ENCODE measurements at regions of chr2 and their contacts with region 1.

Region 1: DNA sequence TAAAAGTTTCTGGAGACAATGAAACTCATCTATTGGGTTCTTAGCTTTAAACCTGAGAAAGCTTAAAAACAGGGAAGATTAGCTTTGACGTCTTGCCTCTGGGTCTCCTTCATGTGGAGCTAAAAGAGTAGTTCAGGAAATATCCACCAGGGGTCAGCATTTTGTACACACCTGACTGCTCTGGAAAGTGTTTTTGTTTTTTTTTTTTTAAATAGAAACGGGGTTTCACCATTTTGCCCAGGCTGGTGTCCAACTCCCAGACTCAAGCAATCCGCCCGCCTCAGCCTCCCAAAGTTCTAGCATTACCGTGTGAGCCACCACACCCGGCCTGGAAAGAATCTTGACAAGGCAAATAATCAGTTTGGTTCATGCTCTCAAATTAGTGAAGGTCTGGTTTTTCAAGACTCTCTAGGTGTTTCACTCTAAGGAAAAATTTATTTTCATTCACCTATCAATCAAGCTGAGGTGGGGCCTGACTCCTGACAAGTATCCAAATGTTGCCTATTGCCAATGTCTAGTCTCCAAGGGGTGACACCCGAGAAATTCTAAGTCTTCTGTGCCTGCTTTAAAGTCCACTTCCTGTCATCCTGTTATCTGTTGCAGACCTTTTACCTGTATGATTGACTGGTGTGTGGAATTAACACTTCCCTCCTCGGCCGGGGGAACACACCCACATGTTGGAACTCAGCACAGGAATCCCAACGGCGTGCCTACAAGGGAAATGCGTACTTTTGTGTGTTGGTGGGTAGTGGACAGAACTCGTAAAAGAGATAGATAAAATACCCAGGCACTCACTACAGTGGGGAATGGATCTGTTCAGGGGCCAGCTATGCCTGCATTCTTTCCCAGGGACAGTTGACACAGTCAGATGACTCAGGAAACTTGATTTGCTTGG is 11.3 kb downstream of the IL1RN start:
- DNase-seq: peak; percentile 77
- H3K4me3 Mint-ChIP-seq: no peak overlapping the region
- H3K27ac Mint-ChIP-seq: no peak overlapping the region
- H3K4me1 Mint-ChIP-seq: peaks cover 20% of the 10 kb centered on the region
- H3K27me3 Mint-ChIP-seq: no peaks in the 10 kb centered on the region
- CTCF ChIP-seq: peak; percentile 58

Region 2: GRCh38 chr2:112960230-112961005 is 178.3 kb before region 1 on chr2:
- CTCF ChIA-PET with region 1: no interaction called
- intact Hi-C with region 1: no loop called
- DNase-seq: peak; percentile 17
- H3K4me3 Mint-ChIP-seq: no peak overlapping the region
- H3K27ac Mint-ChIP-seq: no peak overlapping the region
- H3K4me1 Mint-ChIP-seq: no peaks in the 10 kb centered on the region
- H3K27me3 Mint-ChIP-seq: no peaks in the 10 kb centered on the region
- CTCF ChIP-seq: no peak

Region 3: DNA sequence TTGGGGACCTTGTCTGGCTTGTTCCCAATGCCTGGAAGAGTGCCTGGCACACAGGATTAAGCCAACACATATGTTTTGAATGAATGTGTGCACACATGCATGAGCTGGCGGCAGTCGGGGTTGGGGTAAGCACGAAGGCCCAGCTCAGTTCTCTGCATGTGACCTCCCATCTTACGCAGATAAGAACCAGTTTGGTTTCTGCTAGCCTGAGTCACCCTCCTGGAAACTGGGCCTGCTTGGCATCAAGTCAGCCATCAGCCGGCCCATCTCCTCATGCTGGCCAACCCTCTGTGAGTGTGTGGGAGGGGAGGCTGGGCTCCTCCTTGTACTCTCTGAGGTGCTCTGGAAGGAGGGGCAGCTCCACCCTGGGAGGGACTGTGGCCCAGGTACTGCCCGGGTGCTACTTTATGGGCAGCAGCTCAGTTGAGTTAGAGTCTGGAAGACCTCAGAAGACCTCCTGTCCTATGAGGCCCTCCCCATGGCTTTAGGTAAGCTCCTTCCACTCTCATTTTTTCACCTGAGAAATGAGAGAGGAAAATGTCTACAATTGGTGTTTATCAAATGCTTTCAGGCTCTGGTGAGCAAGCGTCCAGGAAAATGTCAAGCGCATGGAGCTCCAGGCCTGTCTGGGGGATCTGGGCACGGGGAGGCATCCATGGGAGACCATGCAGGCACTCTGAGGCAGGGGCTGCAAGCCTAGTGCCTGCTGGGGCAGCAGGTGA is 21.0 kb before region 1 on chr2:
- CTCF ChIA-PET with region 1: interaction called, 13 read pairs
- intact Hi-C with region 1: no loop called
- DNase-seq: peak; percentile 90
- H3K4me3 Mint-ChIP-seq: peak overlapping the region; percentile 70
- H3K27ac Mint-ChIP-seq: peak overlapping the region; percentile 92
- H3K4me1 Mint-ChIP-seq: peaks cover 50% of the 10 kb centered on the region
- H3K27me3 Mint-ChIP-seq: no peaks in the 10 kb centered on the region
- CTCF ChIP-seq: no peak

Region 4: DNA sequence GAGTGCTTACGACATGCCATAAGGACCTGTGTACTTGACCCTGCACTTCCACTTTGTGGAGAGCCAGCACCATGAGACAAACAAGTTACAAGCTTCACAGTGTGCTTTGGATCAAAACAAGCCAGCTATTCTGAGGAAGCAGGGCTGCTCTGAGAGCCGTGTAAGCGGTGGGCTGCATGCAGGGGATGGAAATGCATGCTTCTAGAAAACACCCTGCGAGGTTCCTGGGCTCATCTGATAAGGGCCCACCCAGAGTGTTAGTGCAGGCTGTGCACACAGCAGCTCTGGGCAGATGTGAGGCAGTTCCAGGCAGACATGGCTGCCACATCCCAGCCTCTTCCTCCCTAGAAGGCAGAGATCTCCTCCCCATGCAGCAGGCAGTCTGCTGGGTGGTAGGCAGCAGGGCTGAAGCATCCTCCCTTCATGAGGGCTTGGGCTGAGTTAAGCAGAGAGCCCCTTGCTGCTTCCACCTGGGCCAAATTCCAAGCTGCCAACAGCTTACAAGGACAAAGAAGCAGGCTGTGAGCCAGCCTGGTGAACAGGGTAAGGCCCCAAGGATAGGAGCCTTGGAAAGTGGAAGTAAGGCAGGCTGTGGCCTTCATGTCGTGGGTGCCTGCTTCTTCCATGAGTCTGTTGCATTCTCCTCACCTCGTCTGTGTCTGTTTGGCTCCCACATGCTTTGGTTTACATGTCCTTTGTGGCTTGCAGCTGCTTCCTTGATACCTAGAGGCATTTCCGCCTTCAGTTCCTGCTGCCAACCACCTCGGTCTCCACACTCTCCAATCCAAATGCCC is 42.8 kb after region 1 on chr2:
- CTCF ChIA-PET with region 1: interaction called, 15 read pairs
- intact Hi-C with region 1: no loop called
- DNase-seq: no peak
- H3K4me3 Mint-ChIP-seq: no peak overlapping the region
- H3K27ac Mint-ChIP-seq: no peak overlapping the region
- H3K4me1 Mint-ChIP-seq: no peaks in the 10 kb centered on the region
- H3K27me3 Mint-ChIP-seq: no peaks in the 10 kb centered on the region
- CTCF ChIP-seq: no peak

Region 5: DNA sequence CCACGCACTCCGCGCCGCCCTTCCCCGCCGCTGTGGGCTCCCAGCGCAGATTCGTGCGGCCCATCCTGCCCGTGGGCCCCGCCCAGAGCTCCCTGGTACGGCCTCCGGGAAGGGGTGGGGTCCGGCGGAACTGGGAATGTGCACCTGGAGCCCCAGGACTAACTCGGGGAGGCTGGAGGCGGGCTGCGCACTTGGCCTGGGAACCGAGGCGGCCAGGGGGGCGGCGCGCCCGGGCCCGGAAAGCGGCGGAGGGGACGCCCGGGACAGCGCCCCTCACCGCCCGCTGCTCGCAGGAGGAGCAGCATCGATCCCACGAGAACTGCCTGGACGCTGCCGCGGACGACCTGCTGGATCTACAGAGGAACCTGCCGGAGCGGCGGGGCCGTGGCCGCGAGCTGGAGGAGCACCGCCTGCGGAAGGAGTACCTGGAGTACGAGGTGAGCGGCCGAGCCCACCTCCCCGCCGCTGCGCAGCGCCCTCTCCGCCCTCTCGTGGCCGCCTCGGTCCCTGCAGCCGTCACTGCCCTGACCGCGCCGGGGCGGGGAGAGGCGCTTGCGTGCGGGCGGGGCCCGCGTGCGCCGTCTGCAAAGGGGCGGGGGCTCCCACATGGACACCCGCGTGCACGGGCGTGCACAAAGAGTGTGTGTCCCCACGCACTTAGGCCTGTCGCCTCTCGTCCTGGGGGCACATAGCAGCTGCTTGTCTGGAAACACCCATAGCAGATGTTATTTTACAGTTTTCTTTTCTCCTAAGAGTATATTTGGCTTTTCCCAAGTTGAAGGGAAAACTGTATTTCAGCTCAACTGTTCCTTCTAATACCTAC is 60.3 kb after region 1 on chr2:
- CTCF ChIA-PET with region 1: interaction called, 35 read pairs
- intact Hi-C with region 1: loop called (anchors 1 kb)
- DNase-seq: peak; percentile 94
- H3K4me3 Mint-ChIP-seq: peak overlapping the region; percentile 69
- H3K27ac Mint-ChIP-seq: peak overlapping the region; percentile 61
- H3K4me1 Mint-ChIP-seq: no peaks in the 10 kb centered on the region
- H3K27me3 Mint-ChIP-seq: no peaks in the 10 kb centered on the region
- CTCF ChIP-seq: peak; percentile 97

Region 6: DNA sequence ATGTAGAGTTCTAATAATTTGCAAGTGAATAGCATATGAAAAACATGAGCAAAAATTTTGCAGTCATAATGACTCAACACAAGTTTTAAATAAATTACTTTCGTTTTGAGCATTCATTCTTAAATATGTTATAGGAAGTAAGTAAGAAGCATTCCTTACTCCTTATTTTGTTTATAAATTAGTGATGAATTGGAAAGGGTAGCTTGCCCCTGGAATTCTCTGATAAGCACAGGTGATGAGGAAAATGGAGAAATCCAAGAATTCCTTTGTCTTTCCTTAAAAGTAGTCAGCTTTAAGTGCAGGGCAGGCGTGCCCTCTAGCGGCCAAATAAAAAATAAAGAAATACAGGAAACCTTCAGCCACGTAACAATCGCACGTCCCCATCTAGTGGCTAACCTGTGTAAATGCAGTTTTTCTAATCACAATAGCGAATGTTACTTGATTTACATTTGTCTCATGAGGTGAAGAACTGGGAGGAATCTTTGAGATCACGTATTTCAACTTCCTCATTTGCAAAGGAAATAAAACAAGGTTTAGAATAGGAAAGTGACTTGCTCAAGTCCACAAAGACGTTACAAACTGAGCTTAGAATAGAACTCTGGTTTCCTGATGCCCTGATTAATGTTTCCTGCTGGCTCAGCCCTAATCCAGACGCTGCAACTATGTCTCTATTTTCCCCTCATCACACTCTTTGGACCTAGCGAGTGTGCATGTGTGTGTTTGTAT is 251.6 kb after region 1 on chr2:
- CTCF ChIA-PET with region 1: interaction called, 19 read pairs
- intact Hi-C with region 1: loop called (anchors 2 kb)
- DNase-seq: peak; percentile 77
- H3K4me3 Mint-ChIP-seq: no peak overlapping the region
- H3K27ac Mint-ChIP-seq: peak overlapping the region; percentile 22
- H3K4me1 Mint-ChIP-seq: no peaks in the 10 kb centered on the region
- H3K27me3 Mint-ChIP-seq: no peaks in the 10 kb centered on the region
- CTCF ChIP-seq: peak; percentile 92